ENCODE measurements at regions of chr17 and their contacts with region 1.

Region 1: GRCh38 chr17:33277436-33278100 is 15.5 kb downstream of the ASIC2 start:
- DNase-seq: no peak

Region 2: DNA sequence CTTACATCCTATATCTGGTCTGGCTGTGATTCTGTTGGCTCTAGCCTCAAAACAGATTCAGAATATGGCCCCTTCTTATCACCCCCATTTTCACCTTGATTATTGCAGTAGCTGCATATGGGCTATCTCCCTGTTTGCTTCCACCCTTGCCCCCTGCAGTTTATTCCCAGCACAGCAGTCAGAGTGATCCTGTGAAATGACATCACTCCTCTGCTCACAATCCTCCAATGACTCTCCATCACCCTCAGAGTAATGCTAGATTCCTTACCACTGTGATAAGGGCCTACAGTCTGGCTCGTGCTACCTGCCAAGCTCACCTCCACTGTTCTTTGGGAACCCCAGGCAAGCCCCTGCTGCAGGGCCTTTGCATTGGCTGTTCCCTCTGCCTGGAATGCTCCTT is 77.0 kb before region 1 on chr17:
- intact Hi-C with region 1: loop called in 1 of 2 experiments (anchors 10 kb)
- DNase-seq: no peak